Right cardiac atrium (tissue), 5 donors: ENCODE measurements at regions of chr5 and their contacts with region 1.

Region 1: GRCh38 chr5:127746756-127747155 is 43.6 kb downstream of the CCDC192 start:
- DNase-seq: no peak
- ATAC-seq: no peak
- H3K4me3 ChIP-seq: no peak overlapping the region
- H3K27ac ChIP-seq: no peak overlapping the region
- H3K4me1 ChIP-seq: no peaks in the 10 kb centered on the region
- H3K27me3 ChIP-seq: no peaks in the 10 kb centered on the region

Region 2: GRCh38 chr5:127386557-127386956 is 360.2 kb before region 1 on chr5:
- intact Hi-C with region 1: no loop called
- DNase-seq: no peak
- ATAC-seq: no peak
- H3K4me3 ChIP-seq: no peak overlapping the region
- H3K27ac ChIP-seq: no peak overlapping the region
- H3K4me1 ChIP-seq: no peaks in the 10 kb centered on the region
- H3K27me3 ChIP-seq: no peaks in the 10 kb centered on the region

Region 3: DNA sequence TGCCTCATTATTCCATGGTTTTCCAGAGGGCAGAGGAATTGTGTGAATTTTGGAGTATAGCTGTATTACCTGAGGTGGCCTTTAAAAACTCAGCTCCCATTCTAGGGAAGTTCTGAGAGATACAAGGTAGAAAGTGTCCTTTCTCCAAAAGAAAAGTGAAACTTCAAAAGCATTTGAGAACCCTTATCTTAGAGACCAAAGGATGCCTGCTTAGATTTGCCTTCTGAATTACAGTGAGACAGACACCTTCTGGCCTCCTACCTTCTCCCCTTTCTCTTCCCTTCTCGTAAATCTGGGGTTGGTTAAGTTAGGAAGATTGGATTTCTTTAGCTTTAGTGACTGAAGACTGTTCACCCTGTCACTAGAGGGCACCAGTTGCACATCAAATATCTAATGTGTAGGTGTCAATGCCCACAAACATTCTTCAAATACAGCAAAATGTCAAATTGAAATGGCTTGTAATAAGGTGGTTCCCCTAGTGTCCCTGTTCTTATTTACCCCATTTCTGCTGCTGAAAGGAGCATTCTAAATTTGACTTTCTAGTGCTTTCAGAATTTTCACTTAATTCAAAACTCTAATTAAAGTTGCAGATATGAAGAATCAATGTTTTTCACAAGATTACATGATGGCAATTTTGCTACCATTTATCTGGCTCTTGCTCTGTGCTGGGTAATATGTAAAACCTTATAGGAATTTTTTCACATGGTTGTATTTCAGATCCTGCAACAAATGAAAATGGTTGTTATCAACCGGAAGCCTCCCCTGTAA is 182.6 kb before region 1 on chr5:
- intact Hi-C with region 1: loop called in 2 of 4 experiments (anchors 10 kb)
- DNase-seq: no peak
- ATAC-seq: peak; percentile 64 to 76
- H3K4me3 ChIP-seq: no peak overlapping the region
- H3K27ac ChIP-seq: no peak overlapping the region
- H3K4me1 ChIP-seq: no peaks in the 10 kb centered on the region
- H3K27me3 ChIP-seq: no peaks in the 10 kb centered on the region